Sigmoid colon (tissue), 7 donors: ENCODE measurements at regions of chr2 and their contacts with region 1.

Region 1: GRCh38 chr2:131093696-131094462 is 619 bp upstream of the FAM168B start:
- DNase-seq: no peak
- H3K4me3 ChIP-seq: peak overlapping the region; percentile 56 to 82 (median 76)
- H3K27ac ChIP-seq: peak overlapping the region; percentile 89 to 96 (median 96)
- H3K4me1 ChIP-seq: peaks cover 0 to 23% (median 18%) of the 10 kb centered on the region in 4 donors
- H3K27me3 ChIP-seq: no peaks in the 10 kb centered on the region
- CTCF ChIP-seq: no peak
- EP300 ChIP-seq: no peak
- POLR2A ChIP-seq: peak in 1 of 2 donors; percentile 10

Region 2: GRCh38 chr2:131105156-131105949 is 11.5 kb after region 1 on chr2 and contains the start of gene PLEKHB2:
- intact Hi-C with region 1: loop called (anchors 1 kb)
- DNase-seq: peak; percentile 94
- H3K4me3 ChIP-seq: peak within 1 kb of the TSS; percentile 75 to 98 (median 87)
- H3K27ac ChIP-seq: peak within 1 kb of the TSS; percentile 85 to 94 (median 90)
- H3K4me1 ChIP-seq: peaks cover 0 to 31% (median 23%) of the 10 kb centered on the region in 4 donors
- H3K27me3 ChIP-seq: no peaks in the 10 kb centered on the region
- CTCF ChIP-seq: no peak
- EP300 ChIP-seq: no peak
- POLR2A ChIP-seq: peak; percentile 79 to 93
- total RNA-seq, gene PLEKHB2: 28.8 to 39.6 (median 33.7) TPM